ENCODE measurements at regions of chr13 and their contacts with region 1.

Region 1: GRCh38 chr13:42377640-42378382 is 105.9 kb downstream of the AKAP11 start:
- DNase-seq: peak; percentile 100
- ATAC-seq: peak; percentile 76
- H3K4me3 ChIP-seq: peak overlapping the region; percentile 18; the same call in 1 of the 2 replicates
- H3K27ac ChIP-seq: peak overlapping the region; percentile 99
- H3K4me1 ChIP-seq: peaks cover 53% of the 10 kb centered on the region
- H3K27me3 ChIP-seq: no peaks in the 10 kb centered on the region
- CTCF ChIP-seq: no peak
- EP300 ChIP-seq: peak; percentile 99 to 100
- POLR2A ChIP-seq: no peak
- RAD21 ChIP-seq: no peak; the same call in 1 of the 2 replicates

Region 2: DNA sequence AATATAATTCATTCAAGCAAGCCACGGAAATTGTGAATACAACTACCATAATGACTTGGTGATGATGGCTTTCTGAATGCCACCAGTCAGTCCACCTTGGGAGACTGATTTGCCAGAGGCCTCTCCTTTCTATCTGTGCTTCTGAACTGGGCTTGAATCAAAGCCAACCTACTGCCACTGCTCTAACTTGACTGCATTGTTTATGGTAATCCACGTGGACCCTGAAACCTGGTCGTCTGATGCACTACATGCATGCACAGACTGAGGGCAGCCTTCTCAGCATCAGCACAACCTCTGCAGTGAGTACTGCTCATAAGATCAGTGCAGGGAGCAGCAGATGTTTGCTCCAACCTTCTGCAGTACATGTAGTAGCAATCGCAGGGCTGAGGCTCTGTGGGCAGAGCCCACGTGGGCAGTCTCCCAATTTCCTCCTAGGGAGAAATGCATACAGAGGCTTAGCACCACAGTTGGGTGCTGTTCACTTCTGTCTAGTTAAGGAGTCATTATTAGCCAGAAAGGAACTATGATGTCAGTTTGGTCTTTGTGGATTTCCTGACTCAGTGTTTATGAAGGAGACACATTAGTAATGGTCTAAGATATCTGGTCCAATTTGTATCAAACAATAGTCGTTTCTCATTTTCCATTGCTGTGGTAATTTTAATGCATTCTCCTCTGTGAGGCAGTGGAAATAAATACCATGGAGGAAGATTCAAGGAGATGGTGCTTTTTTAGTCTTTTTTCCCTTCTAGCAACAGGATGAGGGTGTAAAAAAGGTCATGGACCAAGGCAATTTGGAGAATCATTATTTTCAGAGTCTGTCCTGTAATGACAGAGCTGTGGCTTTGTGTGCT is 23.3 kb before region 1 on chr13:
- CTCF ChIA-PET with region 1: interaction called, 4 read pairs
- POLR2A ChIA-PET with region 1: interaction called, 4 read pairs
- RAD21 ChIA-PET with region 1: interaction called, 13 read pairs
- SMC1A ChIA-PET with region 1: interaction called, 11 read pairs
- in situ Hi-C with region 1: no loop called
- intact Hi-C with region 1: no loop called
- DNase-seq: peak; percentile 53
- ATAC-seq: peak; percentile 92
- H3K4me3 ChIP-seq: no peak overlapping the region
- H3K27ac ChIP-seq: peak overlapping the region; percentile 52
- H3K4me1 ChIP-seq: peaks cover 18% of the 10 kb centered on the region
- H3K27me3 ChIP-seq: no peaks in the 10 kb centered on the region
- CTCF ChIP-seq: peak; percentile 23 to 49 (median 46); a peak in 5 of 6 replicates
- EP300 ChIP-seq: no peak
- POLR2A ChIP-seq: no peak
- RAD21 ChIP-seq: peak; percentile 56

Region 3: GRCh38 chr13:42405665-42406390 is 28.0 kb after region 1 on chr13:
- CTCF ChIA-PET with region 1: interaction called, 33 read pairs
- POLR2A ChIA-PET with region 1: interaction called, 23 read pairs
- RAD21 ChIA-PET with region 1: interaction called, 86 read pairs
- SMC1A ChIA-PET with region 1: interaction called, 210 read pairs
- in situ Hi-C with region 1: no loop called
- intact Hi-C with region 1: loop called (anchors 1 kb)
- DNase-seq: peak; percentile 97
- ATAC-seq: peak; percentile 90
- H3K4me3 ChIP-seq: peak overlapping the region; percentile 31; the same call in 1 of the 2 replicates
- H3K27ac ChIP-seq: peak overlapping the region; percentile 98
- H3K4me1 ChIP-seq: peaks cover 54% of the 10 kb centered on the region
- H3K27me3 ChIP-seq: no peaks in the 10 kb centered on the region
- CTCF ChIP-seq: 0 out of 6 replicates have a peak, but pooled peaks of 1 of the 3 experiments have one; percentile 5
- EP300 ChIP-seq: peak; percentile 86 to 97
- POLR2A ChIP-seq: peak; percentile 48; the same call in 1 of the 2 replicates
- RAD21 ChIP-seq: peak; percentile 45

Region 4: DNA sequence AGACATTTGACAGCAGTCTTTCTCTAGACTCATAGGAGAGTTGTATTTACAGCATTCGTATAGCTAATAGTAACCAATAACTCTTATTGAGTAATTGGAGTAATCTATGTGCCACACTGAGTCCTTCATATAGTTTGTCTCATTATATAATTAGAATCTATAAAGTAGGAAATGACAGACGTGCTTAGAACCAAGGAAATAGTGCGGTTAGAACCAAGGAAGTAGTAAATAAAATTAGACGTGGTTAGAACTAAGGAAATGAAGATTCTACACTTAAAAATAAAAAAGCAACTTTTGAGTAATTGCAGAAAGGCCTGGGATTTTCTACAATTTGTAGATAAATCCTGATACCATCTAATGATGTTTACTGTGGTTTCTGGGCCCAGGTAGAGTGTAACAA is 88.3 kb after region 1 on chr13:
- CTCF ChIA-PET with region 1: no interaction called
- POLR2A ChIA-PET with region 1: no interaction called
- RAD21 ChIA-PET with region 1: interaction called, 14 read pairs
- SMC1A ChIA-PET with region 1: interaction called, 9 read pairs
- in situ Hi-C with region 1: no loop called
- intact Hi-C with region 1: no loop called
- DNase-seq: no peak
- ATAC-seq: peak; percentile 21
- H3K4me3 ChIP-seq: no peak overlapping the region
- H3K27ac ChIP-seq: peak overlapping the region; percentile 13; the same call in 1 of the 2 replicates
- H3K4me1 ChIP-seq: no peaks in the 10 kb centered on the region
- H3K27me3 ChIP-seq: no peaks in the 10 kb centered on the region
- CTCF ChIP-seq: no peak
- EP300 ChIP-seq: no peak
- POLR2A ChIP-seq: no peak
- RAD21 ChIP-seq: no peak

Region 5: DNA sequence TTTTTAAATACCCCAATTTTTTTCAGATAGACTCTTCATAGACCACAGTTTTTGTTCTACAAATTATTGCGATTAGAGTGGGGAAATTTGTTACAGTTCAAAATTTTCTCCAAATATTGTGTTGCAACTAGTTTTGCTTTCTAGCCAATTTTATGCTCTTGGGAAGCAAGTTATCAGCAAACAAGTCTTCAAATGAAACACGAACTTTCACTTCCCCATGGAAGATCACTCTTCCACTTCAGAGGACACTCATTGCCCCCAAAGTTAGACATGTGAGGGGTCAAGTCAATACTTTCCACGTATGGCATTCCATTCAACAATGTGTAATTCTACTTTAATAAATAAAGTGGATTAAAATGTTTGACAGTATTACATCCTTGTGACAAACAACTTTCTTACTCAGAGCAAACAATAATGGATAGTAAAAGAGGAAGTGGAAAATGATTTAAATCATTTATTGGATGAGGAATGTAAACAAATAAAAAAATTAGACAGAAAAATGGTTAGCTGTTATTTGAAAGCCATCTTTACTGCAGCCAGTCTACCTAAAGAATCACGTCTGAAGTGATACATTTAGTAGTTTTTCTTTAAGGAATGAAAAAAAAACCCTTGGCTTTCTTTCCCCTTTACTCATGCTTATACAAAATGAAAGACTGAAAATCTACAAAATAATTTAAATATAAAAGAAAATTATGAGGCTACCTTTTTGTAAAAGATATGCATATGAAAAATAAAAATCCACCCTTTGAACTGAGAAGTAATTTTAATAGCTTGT is 154.9 kb after region 1 on chr13:
- CTCF ChIA-PET with region 1: interaction called, 4 read pairs
- POLR2A ChIA-PET with region 1: interaction called, 3 read pairs
- RAD21 ChIA-PET with region 1: interaction called, 11 read pairs
- SMC1A ChIA-PET with region 1: interaction called, 9 read pairs
- in situ Hi-C with region 1: no loop called
- intact Hi-C with region 1: no loop called
- DNase-seq: peak; percentile 70
- ATAC-seq: peak; percentile 91
- H3K4me3 ChIP-seq: peak overlapping the region; percentile 35; the same call in 1 of the 2 replicates
- H3K27ac ChIP-seq: peak overlapping the region; percentile 49
- H3K4me1 ChIP-seq: peaks cover 16% of the 10 kb centered on the region
- H3K27me3 ChIP-seq: no peaks in the 10 kb centered on the region
- CTCF ChIP-seq: no peak
- EP300 ChIP-seq: peak; percentile 65 to 90; a peak in 3 of 4 replicates
- POLR2A ChIP-seq: no peak
- RAD21 ChIP-seq: no peak

Region 6: DNA sequence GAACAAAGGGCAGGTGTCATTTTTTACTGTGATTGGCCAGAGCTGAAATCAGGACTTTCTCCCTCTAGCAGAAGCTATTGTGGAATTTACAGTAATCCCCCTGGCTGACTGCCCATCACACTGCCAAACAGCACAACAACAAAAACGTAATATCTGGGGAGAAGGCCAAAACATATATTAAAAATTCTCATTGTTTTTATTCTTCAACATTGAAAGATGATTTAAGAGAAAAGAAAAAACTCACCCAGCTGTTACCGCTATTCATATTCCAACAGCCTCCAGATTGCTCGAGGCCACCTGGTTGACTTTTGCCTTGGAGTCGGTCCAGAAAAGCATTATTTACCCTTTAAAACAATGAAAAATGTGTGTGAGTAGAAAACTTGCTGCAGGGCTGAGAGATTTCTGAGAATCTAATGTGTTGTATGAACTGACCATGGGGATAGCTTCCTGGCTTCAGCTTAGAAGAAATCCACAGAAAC is 517.0 kb after region 1 on chr13:
- CTCF ChIA-PET with region 1: no interaction called
- POLR2A ChIA-PET with region 1: no interaction called
- RAD21 ChIA-PET with region 1: no interaction called
- SMC1A ChIA-PET with region 1: no interaction called
- in situ Hi-C with region 1: no loop called
- intact Hi-C with region 1: no loop called
- DNase-seq: no peak
- ATAC-seq: no peak
- H3K4me3 ChIP-seq: no peak overlapping the region
- H3K27ac ChIP-seq: no peak overlapping the region
- H3K4me1 ChIP-seq: no peaks in the 10 kb centered on the region
- H3K27me3 ChIP-seq: no peaks in the 10 kb centered on the region
- CTCF ChIP-seq: no peak
- EP300 ChIP-seq: no peak
- POLR2A ChIP-seq: no peak
- RAD21 ChIP-seq: no peak